HepG2 (cell line): ENCODE measurements at regions of chr22 and their contacts with region 1.

Region 1: GRCh38 chr22:45278125-45278524 is 6.6 kb upstream of the UPK3A start:
- DNase-seq: no peak
- ATAC-seq: no peak
- H3K4me3 ChIP-seq: no peak overlapping the region
- H3K27ac ChIP-seq: peak overlapping the region; percentile 98
- H3K4me1 ChIP-seq: peaks cover 96% of the 10 kb centered on the region
- H3K27me3 ChIP-seq: no peaks in the 10 kb centered on the region
- CTCF ChIP-seq: no peak
- EP300 ChIP-seq: no peak
- POLR2A ChIP-seq: no peak
- RAD21 ChIP-seq: no peak

Region 2: DNA sequence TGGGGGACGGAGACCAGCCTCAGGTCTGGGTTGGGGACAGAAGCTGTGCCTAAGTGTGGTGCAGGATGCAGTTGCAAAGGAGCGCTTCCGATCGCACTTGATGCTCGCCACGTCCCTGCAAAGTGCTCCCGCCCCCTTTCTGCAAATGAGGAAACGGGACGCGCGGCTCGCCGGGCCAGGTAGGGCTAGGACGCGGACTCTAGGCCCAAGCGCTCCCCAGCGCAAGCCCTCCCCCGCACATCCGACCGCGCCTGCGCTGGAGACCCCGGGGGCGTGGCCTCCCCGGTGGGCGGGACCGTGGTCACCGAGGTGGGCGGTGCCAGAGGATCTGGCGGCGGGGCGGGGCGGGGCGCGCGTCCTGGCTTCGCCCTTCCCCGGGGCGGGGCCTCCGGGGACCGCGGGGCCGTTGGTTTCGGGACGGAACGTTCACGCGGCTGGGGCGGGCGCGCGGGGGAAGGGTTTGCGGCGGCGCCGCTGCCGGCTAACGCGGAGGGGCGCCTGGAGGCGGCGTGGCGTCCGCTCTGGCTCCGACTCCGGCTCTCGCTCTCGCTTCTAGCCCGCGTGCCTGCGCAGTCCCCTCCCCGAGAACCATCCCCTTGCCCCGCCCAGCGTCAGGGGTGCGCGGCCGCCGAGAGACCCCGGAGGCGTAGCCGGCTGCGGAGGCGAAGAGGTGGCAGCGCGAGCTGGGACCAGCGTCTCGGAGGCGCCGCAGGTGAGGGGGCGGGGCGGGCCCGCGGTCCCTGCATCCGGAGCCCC is 31.5 kb after region 1 on chr22 and contains the start of gene FAM118A:
- CTCF ChIA-PET with region 1: no interaction called
- POLR2A ChIA-PET with region 1: interaction called, 56 read pairs
- in situ Hi-C with region 1: loop called (anchors 5 kb)
- intact Hi-C with region 1: loop called (anchors 2 kb)
- DNase-seq: peak; percentile 87
- ATAC-seq: peak; percentile 87
- H3K4me3 ChIP-seq: peak within 1 kb of the TSS; percentile 88 to 94 (median 92)
- H3K27ac ChIP-seq: peak within 1 kb of the TSS; percentile 76
- H3K4me1 ChIP-seq: peaks cover 71% of the 10 kb centered on the region
- H3K27me3 ChIP-seq: no peaks in the 10 kb centered on the region
- CTCF ChIP-seq: peak; percentile 44
- EP300 ChIP-seq: no peak; a peak in 1 of 4 replicates
- POLR2A ChIP-seq: peak; percentile 65 to 75
- RAD21 ChIP-seq: peak; percentile 70
- total RNA-seq, gene FAM118A: 26.4 and 36.7 TPM in 2 replicates

Region 3: DNA sequence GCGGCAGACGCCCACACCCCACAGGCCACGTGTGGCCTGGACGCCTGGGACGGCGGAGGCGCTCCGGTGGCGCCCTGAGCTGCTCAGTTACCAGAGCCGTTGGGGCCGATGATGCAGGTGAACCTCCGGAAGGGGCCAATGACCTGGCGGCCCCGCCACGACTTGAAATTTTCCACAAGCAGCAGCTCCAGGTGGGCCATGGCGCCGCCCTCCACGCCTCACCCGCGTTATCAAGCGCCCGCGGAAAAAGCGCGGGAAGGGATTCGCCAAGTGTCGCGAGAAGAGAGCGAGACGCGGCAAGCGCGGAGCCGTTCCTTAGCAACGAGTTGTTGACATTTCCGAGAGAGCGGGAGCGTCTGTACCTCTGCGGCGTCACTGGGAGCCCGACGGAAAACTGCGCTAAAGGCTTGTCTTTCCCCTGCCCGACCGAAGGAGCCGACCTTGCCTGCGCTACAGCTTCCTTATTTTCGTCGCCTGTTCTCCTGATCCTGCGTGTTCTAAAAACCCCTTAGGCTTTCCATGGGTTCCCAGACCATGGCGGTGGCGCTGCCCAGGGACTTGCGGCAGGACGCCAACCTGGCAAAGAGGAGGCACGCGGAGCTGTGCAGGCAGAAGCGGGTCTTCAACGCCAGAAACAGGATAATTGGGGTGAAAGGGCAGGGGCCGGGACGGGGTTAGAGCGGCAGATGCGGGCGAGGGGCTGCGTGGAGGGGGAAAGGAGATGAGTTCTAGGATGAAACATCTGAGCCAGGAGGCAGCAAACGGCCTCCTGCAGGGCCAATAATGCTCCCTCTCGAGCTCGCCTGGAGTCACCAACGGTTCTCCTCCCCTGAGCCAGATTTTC is 135.5 kb after region 1 on chr22 and contains the starts of genes RIBC2 and SMC1B:
- CTCF ChIA-PET with region 1: no interaction called
- POLR2A ChIA-PET with region 1: no interaction called
- in situ Hi-C with region 1: no loop called
- intact Hi-C with region 1: no loop called
- DNase-seq: peak; percentile 47
- ATAC-seq: peak; percentile 79
- H3K4me3 ChIP-seq: peak within 1 kb of the TSS; percentile 37 to 71 (median 41); a peak in 5 of 6 replicates
- H3K27ac ChIP-seq: no peak within 1 kb of the TSS
- H3K4me1 ChIP-seq: peaks cover 10% of the 10 kb centered on the region; the same call in 1 of the 2 replicates
- H3K27me3 ChIP-seq: peaks cover 2 to 8% of the 10 kb centered on the region in 2 experiments; a peak in 1 of 5 replicates
- CTCF ChIP-seq: no peak
- EP300 ChIP-seq: no peak
- POLR2A ChIP-seq: no peak
- RAD21 ChIP-seq: no peak
- total RNA-seq, gene RIBC2: 0.55 and 0.81 TPM in 2 replicates
- total RNA-seq, gene SMC1B: not detected in 2 replicates